GM10248 (cell line): ENCODE measurements at regions of chr5 and their contacts with region 1.

Region 1: DNA sequence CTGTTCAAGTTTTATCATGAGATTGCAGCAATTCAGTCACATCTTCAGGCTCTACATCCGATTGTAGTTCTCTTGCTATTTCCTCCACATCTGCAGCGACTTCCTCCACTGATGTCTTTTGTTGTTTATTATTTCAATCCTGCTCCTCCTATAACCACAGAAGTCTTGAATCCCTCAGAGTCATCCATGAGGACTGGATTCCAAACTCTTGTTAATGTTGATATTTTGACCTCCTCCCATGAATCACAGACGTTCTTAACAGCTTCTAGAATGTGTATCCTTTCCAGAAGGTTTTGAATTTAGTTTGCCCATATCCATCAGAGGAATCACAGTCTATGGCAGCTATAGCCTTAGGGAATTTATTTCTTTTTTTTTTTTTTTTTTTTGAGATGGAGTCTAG is 3.6 kb downstream of the FBXO38 start:
- DNase-seq: no peak
- CTCF ChIP-seq: no peak

Region 2: GRCh38 chr5:148401604-148402003 is 14.3 kb after region 1 on chr5:
- CTCF ChIA-PET with region 1: interaction called, 10 read pairs
- POLR2A ChIA-PET with region 1: no interaction called
- DNase-seq: no peak
- CTCF ChIP-seq: no peak